HEK293 (cell line): ENCODE measurements at regions of chr14 and their contacts with region 1.

Region 1: GRCh38 chr14:49620182-49621113 is at the starts of genes MGAT2 and RPL36AL:
- H3K4me3 ChIP-seq: peak within 1 kb of the TSS; percentile 87
- H3K27ac ChIP-seq: peak within 1 kb of the TSS; percentile 96
- H3K4me1 ChIP-seq: no peaks in the 10 kb centered on the region
- CTCF ChIP-seq: peak; percentile 81

Region 2: DNA sequence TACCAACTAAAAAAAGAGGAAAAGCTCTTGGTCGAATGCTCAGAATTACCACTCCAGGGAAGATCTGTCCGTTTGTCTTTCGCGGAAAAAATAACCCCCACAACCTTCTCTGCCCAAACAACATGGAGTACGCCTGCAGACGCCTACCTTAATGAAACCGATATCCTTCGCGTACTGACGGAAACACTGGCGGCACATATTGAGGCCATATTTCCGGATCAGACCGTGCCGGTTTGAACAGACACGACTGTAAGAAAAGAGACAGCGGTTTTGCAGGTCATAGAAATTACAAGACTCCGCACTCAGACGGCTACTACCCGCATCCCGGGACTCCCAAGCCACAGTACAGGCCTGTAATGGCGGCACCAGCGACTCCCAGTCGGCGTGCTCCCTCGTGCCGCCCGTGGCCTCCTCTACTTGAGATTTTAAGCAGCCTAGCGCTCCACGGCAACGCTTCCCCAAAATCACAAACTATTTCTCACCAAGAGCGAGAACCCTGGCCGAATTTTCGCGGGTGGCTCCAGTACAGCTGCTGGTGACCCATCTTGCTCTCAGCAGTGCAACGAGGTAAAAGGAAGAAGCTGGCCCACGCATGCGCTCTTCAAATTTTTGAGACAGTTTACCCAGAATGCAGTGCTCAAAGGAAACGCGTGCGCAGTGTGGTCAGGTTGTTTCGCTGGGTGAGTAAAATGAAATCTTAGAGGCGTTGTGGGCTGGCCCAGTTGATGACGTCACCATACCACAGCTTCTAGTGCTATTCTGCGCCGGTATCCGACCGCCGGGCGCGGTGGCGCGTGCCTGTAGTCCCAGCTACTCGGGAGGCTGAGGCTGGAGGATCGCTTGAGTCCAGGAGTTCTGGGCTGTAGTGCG is 34.4 kb before region 1 on chr14 and contains the start of gene RPS29:
- CTCF ChIA-PET with region 1: interaction called, 8 read pairs
- POLR2A ChIA-PET with region 1: interaction called, 43 read pairs
- H3K4me3 ChIP-seq: peak within 1 kb of the TSS; percentile 92
- H3K27ac ChIP-seq: peak within 1 kb of the TSS; percentile 76
- H3K4me1 ChIP-seq: peaks cover 9% of the 10 kb centered on the region
- CTCF ChIP-seq: no peak

Region 3: DNA sequence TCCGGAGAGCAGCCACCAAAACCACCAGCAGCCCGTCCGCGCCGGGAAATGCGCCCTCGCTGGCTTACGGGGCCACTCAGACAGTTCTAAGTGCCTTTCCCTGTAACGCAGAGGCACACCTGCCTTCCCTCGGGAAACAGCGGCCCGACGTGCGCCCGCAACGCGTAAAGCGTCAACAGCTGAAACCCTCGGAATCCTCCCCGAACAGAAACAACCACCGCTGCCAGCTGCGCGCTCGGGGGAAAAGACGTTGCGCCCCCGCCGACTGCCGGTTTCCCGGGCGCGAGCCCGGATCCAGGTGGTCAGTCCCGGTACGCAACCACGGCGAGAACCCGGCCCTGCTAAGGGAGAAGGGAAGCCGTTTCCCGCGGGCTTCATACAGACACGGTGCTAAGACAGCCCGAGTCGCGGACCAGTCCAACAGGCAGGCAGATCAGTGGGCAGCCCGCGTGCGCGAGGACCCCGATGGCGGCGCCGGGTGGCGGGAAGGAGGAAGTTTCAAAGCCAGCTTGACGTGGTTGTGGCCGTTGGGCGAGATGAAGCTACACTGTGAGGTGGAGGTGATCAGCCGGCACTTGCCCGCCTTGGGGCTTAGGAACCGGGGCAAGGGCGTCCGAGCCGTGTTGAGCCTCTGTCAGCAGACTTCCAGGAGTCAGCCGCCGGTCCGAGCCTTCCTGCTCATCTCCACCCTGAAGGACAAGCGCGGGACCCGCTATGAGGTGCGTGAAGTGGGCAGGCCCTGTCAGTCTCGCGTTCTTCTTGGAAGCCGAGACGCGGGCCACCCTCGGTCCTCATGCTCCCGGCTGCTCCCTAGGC is 21.8 kb before region 1 on chr14 and contains the start of gene LRR1:
- CTCF ChIA-PET with region 1: no interaction called
- POLR2A ChIA-PET with region 1: interaction called, 33 read pairs
- H3K4me3 ChIP-seq: peak within 1 kb of the TSS; percentile 87
- H3K27ac ChIP-seq: peak within 1 kb of the TSS; percentile 98
- H3K4me1 ChIP-seq: peaks cover 10% of the 10 kb centered on the region
- CTCF ChIP-seq: peak; percentile 5; the same call in 1 of the 2 replicates

Region 4: DNA sequence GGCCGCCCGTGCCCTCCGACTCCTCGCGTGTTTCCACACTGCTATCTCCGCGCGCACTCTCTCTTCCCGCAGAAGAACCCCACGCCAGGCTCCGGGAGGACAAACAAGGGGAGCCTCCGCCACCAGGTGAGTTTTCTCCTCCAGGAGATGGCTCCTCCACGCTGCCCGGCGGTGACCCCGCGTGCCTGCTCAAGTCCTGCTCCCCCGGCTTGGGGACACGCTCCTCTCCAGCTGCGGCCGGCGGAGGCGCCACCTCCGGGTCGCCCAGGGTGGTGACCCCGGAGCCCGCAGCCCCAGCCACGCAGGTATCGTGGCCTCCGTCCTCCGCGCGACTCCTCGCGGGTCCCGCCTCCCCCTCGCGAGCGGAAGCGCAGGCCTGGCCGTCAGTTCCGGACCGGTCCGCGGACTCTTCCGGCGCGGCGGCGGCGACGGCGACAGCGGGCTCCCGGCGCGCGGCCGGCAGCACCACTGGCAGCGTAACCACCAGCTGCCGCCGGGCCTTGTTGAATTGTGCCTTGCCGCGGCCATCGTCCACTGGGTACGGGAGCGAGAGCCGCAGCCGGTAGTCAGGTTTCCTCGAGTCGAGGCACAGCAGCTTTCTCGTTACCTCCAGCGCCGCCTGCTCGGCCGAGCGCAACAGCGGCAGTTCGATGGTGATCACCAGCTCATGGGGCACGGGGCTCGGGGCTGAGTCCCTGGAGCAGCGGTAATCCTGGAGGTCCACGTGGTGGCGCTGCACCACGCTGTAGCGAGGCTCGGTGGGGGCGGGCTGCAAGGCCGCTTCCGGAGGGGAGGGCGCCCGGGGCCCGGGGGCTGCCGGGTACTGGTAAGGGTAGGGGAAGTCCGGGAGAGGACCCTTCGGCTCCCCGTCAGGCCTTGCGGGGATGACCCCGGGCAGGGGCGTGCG is 13.4 kb after region 1 on chr14:
- CTCF ChIA-PET with region 1: interaction called, 10 read pairs
- POLR2A ChIA-PET with region 1: interaction called, 44 read pairs
- H3K4me3 ChIP-seq: peak overlapping the region; percentile 98
- H3K27ac ChIP-seq: peak overlapping the region; percentile 94
- H3K4me1 ChIP-seq: no peaks in the 10 kb centered on the region
- CTCF ChIP-seq: peak; percentile 94

Region 5: GRCh38 chr14:49767562-49768300 is 147.3 kb after region 1 on chr14 and contains the start of gene KLHDC2:
- CTCF ChIA-PET with region 1: interaction called, 3 read pairs
- POLR2A ChIA-PET with region 1: interaction called, 20 read pairs
- H3K4me3 ChIP-seq: peak within 1 kb of the TSS; percentile 99
- H3K27ac ChIP-seq: peak within 1 kb of the TSS; percentile 98
- H3K4me1 ChIP-seq: peaks cover 18% of the 10 kb centered on the region
- CTCF ChIP-seq: no peak

Region 6: DNA sequence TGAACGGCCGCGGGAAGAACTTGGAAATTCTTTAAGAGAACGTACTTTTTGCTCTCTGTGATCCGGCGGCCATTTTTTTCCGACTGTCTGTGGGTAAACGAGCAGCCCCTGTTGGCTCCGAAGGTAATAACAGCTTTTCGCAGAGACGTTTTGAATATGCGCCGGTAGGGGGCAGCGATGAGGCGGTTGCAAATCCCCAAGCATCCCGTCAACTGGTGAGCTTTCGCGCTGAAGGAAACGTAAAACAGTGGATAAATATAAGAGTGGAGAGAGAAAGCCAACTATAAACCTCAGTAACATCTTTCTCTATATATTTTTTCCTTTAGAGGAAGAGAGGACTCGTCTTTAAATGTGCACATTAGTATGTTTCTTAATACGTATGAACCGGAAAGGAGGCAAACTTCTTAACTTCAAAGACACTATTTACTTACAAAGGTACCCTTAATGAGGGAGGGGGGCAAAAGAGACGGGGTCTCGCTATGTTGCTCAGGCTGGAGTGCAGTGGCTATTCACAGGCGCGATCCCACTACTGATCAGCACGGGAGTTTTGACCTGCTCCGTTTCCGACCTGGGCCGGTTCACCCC is 241.7 kb after region 1 on chr14:
- CTCF ChIA-PET with region 1: no interaction called
- POLR2A ChIA-PET with region 1: interaction called, 13 read pairs
- H3K4me3 ChIP-seq: peak overlapping the region; percentile 77
- H3K27ac ChIP-seq: peak overlapping the region; percentile 75
- H3K4me1 ChIP-seq: peaks cover 2% of the 10 kb centered on the region; the same call in 1 of the 2 replicates
- CTCF ChIP-seq: peak; percentile 96